Activated naive CD4-positive, alpha-beta T cell treated with anti-CD3 and anti-CD28 coated beads for 36 hours (primary cell): ENCODE measurements at regions of chr17 and their contacts with region 1.

Region 1: DNA sequence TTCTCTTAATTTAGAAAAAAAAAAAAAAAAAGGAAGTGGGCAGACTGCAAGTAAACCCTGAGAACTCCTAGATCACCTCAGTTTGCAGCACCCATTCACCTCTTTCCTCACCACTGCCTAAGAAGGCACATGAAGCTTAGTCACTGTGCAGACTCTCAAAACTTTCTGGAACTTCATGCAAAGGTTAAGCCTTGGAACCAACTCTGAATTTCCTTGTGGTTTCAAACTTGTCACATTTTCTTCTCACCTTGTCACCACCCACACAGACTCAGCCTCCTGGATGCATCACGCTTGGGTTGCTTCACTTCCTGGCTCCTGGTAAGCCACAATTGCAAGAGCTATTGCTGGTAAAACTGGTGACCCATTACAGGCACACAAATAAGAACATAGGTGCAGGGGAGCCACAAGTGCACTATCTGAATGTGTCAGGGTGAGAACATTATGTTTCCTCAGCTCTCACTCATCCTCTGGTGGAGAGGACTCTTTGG is 15.0 kb upstream of the CPD start:
- DNase-seq: peak; percentile 97
- H3K4me3 Mint-ChIP-seq: no peak overlapping the region
- H3K27ac Mint-ChIP-seq: peak overlapping the region; percentile 79
- H3K4me1 Mint-ChIP-seq: peaks cover 31% of the 10 kb centered on the region
- H3K27me3 Mint-ChIP-seq: no peaks in the 10 kb centered on the region

Region 2: DNA sequence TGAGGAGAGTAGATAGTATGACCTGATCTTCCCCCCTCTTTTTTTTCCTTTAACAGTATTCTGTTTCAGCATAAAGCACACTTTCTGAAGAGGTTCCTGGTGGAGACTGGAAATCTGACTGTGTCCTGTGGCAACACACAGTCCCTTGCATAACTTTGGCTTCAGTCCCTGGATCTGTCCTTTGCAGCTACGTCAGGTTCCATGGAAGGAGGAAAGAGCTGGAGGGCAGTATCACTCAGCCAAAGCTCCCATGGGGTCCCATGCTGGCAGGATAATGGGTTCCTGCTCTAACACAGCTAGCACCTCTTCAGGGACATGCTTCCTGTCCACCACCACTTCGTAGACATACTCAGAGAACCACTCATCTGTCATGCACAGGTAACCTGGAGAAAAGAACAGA is 115.0 kb before region 1 on chr17:
- CTCF ChIA-PET with region 1: no interaction called
- intact Hi-C with region 1: no loop called
- DNase-seq: no peak
- H3K4me3 Mint-ChIP-seq: no peak overlapping the region
- H3K27ac Mint-ChIP-seq: no peak overlapping the region
- H3K4me1 Mint-ChIP-seq: no peaks in the 10 kb centered on the region
- H3K27me3 Mint-ChIP-seq: no peaks in the 10 kb centered on the region

Region 3: GRCh38 chr17:30291543-30292285 is 72.0 kb before region 1 on chr17 and contains the start of gene BLMH:
- CTCF ChIA-PET with region 1: interaction called, 3 read pairs
- intact Hi-C with region 1: loop called (anchors 1 kb)
- DNase-seq: peak; percentile 85
- H3K4me3 Mint-ChIP-seq: peak within 1 kb of the TSS; percentile 90
- H3K27ac Mint-ChIP-seq: peak within 1 kb of the TSS; percentile 87
- H3K4me1 Mint-ChIP-seq: peaks cover 16% of the 10 kb centered on the region
- H3K27me3 Mint-ChIP-seq: no peaks in the 10 kb centered on the region
- total RNA-seq, gene BLMH: 60.9 to 61.5 TPM

Region 4: DNA sequence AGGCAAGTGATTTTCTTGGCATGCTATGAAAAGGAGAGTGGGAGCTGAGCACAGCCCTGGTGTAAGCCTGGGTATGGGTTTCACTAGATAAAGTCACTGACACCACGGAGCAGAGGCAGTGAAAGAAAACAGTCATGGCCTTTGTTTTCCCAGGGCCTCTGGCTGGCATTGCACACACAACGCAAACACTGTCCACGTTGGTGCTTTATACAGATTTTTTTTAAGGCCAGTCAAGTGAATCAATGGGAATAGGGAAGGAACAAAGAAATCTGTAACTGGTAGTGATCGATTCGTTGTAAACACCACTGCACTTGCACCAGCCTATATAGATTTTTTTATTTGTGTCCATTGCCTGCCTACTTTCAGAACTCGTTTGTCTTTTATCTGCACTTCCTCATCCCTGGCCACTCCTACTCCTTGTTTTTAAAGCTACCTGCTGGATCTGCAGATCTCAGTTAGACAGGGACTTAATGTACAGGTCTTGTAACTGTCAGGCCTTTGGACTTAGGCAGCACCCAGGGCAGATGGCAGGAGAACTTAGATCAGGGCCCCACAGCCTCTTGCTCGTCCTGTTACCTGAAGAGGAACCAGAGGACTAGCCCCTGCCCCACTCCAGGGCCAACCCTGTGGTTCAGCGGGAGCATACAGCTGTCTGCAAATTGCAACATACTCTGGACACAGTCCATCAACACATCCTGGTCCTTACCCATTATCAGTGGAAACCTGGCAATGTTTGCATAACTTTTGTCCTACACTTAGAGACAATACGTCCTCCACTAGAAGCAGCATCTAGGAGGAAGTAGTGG is 19.3 kb before region 1 on chr17:
- CTCF ChIA-PET with region 1: interaction called, 8 read pairs
- intact Hi-C with region 1: loop called (anchors 1 kb)
- DNase-seq: no peak
- H3K4me3 Mint-ChIP-seq: no peak overlapping the region
- H3K27ac Mint-ChIP-seq: no peak overlapping the region
- H3K4me1 Mint-ChIP-seq: peaks cover 21% of the 10 kb centered on the region
- H3K27me3 Mint-ChIP-seq: no peaks in the 10 kb centered on the region

Region 5: GRCh38 chr17:30388299-30389179 is 24.8 kb after region 1 on chr17:
- CTCF ChIA-PET with region 1: no interaction called
- intact Hi-C with region 1: no loop called
- DNase-seq: no peak
- H3K4me3 Mint-ChIP-seq: no peak overlapping the region
- H3K27ac Mint-ChIP-seq: no peak overlapping the region
- H3K4me1 Mint-ChIP-seq: peaks cover 3% of the 10 kb centered on the region
- H3K27me3 Mint-ChIP-seq: no peaks in the 10 kb centered on the region

Region 6: DNA sequence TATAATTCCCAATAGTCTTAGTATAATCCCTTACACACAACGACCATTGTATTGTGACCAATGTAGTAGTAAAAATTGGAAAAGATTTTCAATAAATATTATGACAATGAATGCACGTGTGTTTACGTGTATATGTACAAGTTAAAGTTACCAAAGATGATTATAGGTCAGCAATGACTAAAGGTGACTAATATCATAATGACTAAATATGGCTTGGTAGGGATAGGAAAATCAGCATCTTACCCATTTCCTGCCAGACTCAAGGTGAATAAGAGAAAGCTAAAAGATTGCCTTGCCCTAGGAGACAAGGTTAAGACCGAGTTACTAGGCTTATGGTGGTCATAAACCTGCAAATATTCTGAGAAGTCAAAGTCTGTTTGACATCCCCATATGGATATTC is 49.4 kb after region 1 on chr17:
- CTCF ChIA-PET with region 1: no interaction called
- intact Hi-C with region 1: loop called (anchors 1 kb)
- DNase-seq: no peak
- H3K4me3 Mint-ChIP-seq: no peak overlapping the region
- H3K27ac Mint-ChIP-seq: peak overlapping the region; percentile 63
- H3K4me1 Mint-ChIP-seq: peaks cover 32% of the 10 kb centered on the region
- H3K27me3 Mint-ChIP-seq: no peaks in the 10 kb centered on the region

Region 7: DNA sequence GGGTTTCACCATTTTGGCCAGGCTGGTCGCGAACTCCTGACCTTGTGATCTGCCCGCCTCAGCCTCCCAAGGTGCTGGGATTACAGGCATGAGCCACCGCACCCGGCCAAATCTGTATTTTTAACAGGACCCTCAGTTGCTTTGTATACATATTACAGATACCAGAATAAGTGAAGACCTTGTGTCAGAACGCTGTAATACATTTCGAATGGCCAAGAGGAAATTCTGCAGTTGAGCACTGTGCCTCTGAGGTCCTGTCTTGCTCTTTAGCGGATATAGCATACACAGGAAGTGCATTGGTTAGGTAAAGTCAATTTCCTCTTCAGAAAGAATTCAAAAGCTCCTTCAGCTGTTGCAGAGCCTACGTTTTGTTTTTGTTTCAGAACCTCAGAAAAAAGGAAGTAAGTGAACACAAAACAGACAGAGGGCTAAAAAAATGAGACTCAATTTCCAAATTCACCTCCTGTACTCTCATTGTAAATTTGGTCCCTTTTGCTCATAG is 445.1 kb after region 1 on chr17:
- CTCF ChIA-PET with region 1: no interaction called
- intact Hi-C with region 1: loop called (anchors 5 kb)
- DNase-seq: peak; percentile 49
- H3K4me3 Mint-ChIP-seq: peak overlapping the region; percentile 87
- H3K27ac Mint-ChIP-seq: peak overlapping the region; percentile 99
- H3K4me1 Mint-ChIP-seq: peaks cover 70% of the 10 kb centered on the region
- H3K27me3 Mint-ChIP-seq: no peaks in the 10 kb centered on the region

Region 8: GRCh38 chr17:30970831-30971567 is 607.2 kb after region 1 on chr17 and contains the start of gene RNF135:
- CTCF ChIA-PET with region 1: no interaction called
- intact Hi-C with region 1: loop called (anchors 5 kb)
- DNase-seq: peak; percentile 60
- H3K4me3 Mint-ChIP-seq: peak within 1 kb of the TSS; percentile 88
- H3K27ac Mint-ChIP-seq: peak within 1 kb of the TSS; percentile 79
- H3K4me1 Mint-ChIP-seq: peaks cover 31% of the 10 kb centered on the region
- H3K27me3 Mint-ChIP-seq: peaks cover 9% of the 10 kb centered on the region
- total RNA-seq, gene RNF135: 5.0 to 5.4 TPM